CD4-positive, alpha-beta memory T cell (primary cell): ENCODE measurements at regions of chr1 and their contacts with region 1.

Region 1: DNA sequence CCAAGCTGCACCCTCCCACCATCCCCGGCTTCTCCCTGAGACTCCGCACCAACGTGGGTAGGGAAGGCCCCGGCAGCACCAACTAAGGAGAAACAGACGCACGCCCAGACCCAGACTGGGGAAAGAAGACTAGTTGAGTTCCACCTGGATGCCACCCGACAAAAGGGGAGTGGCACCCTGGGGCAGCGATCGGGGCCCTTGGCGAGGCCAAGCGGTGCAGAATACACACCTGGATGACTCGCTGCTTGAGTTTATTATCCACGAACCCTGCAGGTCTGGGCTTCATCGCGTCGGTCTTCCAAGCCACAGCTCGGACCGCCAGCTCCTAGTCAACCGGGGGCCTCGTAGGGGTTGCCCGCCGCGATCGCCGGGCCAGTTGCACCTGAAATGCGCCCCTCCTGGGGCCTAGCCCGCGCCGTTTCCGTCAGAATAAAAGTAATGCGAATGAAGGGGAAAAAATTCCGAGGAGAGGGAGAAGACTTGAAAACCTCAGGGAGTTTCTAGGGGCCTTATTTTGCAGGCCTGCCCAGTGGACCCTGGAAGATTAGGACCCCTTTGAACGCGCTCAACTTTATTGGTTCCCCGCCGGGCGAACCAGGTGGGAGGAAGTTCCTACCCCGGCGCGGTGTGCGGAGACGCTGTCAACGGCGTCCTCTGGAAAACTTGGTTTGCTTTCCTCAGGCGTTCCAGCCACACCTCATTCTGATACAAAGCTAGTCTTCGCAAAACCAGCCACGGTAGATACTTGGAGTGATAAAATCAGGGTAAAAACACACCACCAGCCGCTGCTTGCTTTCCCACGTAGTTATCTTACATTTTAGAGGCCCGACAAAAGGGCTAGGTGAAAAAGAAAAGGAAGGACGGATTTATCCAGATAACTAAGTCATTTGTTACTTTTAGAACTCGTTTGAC is at the start of gene NVL:
- DNase-seq: peak; percentile 82 to 85 (median 84)
- H3K4me3 ChIP-seq: peak within 1 kb of the TSS; percentile 85 to 99
- H3K4me3 Mint-ChIP-seq: peak within 1 kb of the TSS; percentile 91 to 99 (median 98)
- H3K27ac ChIP-seq: peak within 1 kb of the TSS; percentile 75
- H3K27ac Mint-ChIP-seq: peak within 1 kb of the TSS; percentile 95 to 99 (median 99)
- H3K4me1 ChIP-seq: peaks cover 49% of the 10 kb centered on the region
- H3K4me1 Mint-ChIP-seq: peaks cover 31 to 59% (median 43%) of the 10 kb centered on the region in 4 donors
- H3K27me3 ChIP-seq: no peaks in the 10 kb centered on the region
- H3K27me3 Mint-ChIP-seq: no peaks in the 10 kb centered on the region
- total RNA-seq, gene NVL: 38.9 to 46.7 TPM

Region 2: DNA sequence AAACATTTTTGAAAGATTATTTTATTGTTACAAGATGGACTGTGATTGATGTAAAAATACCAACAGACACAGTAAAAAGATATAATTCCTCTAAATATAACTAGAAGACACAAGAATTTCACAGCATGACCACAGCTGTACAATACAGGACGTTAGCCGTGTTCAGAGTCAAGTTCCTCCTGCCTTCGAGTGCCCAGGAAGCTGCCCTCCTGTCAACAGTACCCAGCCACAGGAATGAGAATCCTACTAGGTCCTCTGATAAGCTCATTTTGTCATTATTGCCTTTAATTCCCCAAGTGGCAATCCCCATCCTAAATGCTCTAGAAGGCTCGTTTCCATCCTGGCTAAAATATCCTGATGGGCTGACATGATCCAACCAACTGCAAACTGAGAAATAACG is 634.2 kb before region 1 on chr1:
- CTCF ChIA-PET with region 1: no interaction called
- POLR2A ChIA-PET with region 1: no interaction called
- intact Hi-C with region 1: loop called (anchors 5 kb)
- DNase-seq: no peak
- H3K4me3 ChIP-seq: no peak overlapping the region
- H3K4me3 Mint-ChIP-seq: no peak overlapping the region
- H3K27ac ChIP-seq: no peak overlapping the region
- H3K27ac Mint-ChIP-seq: no peak overlapping the region
- H3K4me1 ChIP-seq: peaks cover 7% of the 10 kb centered on the region
- H3K4me1 Mint-ChIP-seq: peaks cover 4 to 13% (median 5%) of the 10 kb centered on the region in 4 donors
- H3K27me3 ChIP-seq: no peaks in the 10 kb centered on the region
- H3K27me3 Mint-ChIP-seq: peaks cover 2 to 5% of the 10 kb centered on the region in 2 donors

Region 3: DNA sequence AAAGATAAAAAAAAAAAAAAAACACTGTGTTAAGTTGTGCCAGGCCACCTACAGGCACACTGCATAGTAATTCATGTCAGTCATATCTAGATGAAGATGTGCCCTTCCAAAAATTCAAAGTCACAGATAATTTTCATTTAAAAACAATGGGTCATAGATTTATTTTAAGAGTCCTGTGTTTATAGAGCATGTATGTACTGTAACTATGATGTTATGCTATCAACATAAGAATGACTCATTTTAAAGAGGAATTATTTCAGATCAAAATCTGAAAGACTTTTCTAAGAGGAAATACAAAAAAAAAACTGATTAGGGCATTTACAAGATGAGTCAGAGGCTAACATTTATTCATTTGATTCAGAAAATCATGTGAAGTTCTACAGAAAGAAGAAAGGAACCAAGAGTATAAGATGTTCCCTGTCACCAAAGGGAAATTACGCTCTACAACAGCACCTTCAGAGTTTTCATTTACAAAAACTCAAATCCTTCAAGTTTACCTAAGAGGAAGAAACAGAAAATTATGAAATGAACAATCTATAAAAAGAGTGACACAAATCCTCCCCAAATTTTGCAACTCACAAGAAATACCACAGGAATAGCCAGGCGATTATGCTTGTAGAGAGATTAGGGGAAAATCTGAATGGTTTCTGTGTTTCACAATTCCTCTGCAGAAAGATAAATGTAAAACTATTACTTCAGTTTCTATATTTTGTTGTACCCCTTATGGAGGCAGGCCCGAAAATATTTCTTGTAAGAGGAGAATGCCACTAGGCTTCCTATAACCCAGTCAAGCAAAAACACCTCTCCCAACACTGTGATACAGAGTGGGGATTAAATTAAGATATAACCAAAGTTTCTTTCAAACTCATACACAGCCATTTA is 498.1 kb before region 1 on chr1:
- CTCF ChIA-PET with region 1: no interaction called
- POLR2A ChIA-PET with region 1: no interaction called
- intact Hi-C with region 1: loop called (anchors 5 kb)
- DNase-seq: peak; percentile 20 to 54 (median 52)
- H3K4me3 ChIP-seq: no peak overlapping the region
- H3K4me3 Mint-ChIP-seq: peak overlapping the region; percentile 43 to 81 (median 66)
- H3K27ac ChIP-seq: peak overlapping the region; percentile 70
- H3K27ac Mint-ChIP-seq: peak overlapping the region in 4 of 7 donors; percentile 57 to 97 (median 84)
- H3K4me1 ChIP-seq: peaks cover 69% of the 10 kb centered on the region
- H3K4me1 Mint-ChIP-seq: peaks cover 20 to 30% (median 25%) of the 10 kb centered on the region in 4 donors
- H3K27me3 ChIP-seq: no peaks in the 10 kb centered on the region
- H3K27me3 Mint-ChIP-seq: no peaks in the 10 kb centered on the region

Region 4: DNA sequence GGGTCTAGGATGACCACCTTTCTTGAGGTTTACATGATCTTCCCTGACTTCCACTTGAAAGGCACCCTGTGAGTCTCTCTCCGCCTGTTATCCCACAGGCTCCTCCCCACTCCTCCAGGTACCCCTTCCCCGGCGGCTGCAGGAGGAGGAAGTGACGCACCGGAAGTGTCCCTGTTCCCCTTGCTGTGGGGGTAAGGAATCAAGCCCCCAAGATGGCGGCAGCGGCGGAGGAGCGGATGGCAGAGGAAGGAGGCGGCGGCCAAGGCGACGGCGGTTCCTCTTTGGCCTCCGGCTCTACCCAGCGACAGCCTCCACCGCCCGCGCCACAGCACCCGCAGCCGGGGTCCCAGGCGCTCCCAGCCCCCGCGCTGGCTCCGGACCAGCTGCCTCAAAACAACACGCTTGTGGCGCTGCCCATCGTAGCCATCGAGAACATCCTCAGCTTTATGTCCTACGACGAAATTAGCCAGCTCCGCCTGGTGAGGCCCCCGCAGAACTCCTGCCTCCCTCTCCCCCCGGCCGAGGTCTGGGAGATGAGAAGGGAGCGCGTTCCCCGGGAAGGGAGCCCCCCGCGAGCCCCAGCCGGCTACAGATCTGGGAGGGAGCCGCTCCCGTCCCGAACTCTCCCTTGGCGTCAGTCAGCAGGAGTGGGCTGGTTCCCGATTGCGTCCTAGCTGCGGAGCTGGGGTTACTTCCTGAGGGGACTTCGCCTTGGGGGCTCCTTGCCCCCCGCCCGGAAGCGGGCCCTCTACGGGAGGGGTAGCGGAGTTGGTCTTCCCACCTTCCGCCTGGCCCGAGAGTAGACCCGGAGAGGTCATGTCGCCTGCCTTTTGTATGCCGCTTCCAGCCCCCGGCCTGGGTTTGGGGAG is 215.9 kb before region 1 on chr1 and contains the start of gene FBXO28:
- CTCF ChIA-PET with region 1: interaction called, 68 read pairs
- POLR2A ChIA-PET with region 1: interaction called, 22 read pairs
- intact Hi-C with region 1: loop called (anchors 1 kb)
- DNase-seq: peak; percentile 87 to 95 (median 89)
- H3K4me3 ChIP-seq: peak within 1 kb of the TSS; percentile 53 to 54
- H3K4me3 Mint-ChIP-seq: peak within 1 kb of the TSS; percentile 87 to 97 (median 94)
- H3K27ac ChIP-seq: peak within 1 kb of the TSS; percentile 97
- H3K27ac Mint-ChIP-seq: peak within 1 kb of the TSS; percentile 84 to 97 (median 95)
- H3K4me1 ChIP-seq: peaks cover 32% of the 10 kb centered on the region
- H3K4me1 Mint-ChIP-seq: peaks cover 17 to 32% (median 24%) of the 10 kb centered on the region in 4 donors
- H3K27me3 ChIP-seq: no peaks in the 10 kb centered on the region
- H3K27me3 Mint-ChIP-seq: peaks cover 0 to 2% of the 10 kb centered on the region in 2 donors
- total RNA-seq, gene FBXO28: 36.4 to 39.7 TPM

Region 5: DNA sequence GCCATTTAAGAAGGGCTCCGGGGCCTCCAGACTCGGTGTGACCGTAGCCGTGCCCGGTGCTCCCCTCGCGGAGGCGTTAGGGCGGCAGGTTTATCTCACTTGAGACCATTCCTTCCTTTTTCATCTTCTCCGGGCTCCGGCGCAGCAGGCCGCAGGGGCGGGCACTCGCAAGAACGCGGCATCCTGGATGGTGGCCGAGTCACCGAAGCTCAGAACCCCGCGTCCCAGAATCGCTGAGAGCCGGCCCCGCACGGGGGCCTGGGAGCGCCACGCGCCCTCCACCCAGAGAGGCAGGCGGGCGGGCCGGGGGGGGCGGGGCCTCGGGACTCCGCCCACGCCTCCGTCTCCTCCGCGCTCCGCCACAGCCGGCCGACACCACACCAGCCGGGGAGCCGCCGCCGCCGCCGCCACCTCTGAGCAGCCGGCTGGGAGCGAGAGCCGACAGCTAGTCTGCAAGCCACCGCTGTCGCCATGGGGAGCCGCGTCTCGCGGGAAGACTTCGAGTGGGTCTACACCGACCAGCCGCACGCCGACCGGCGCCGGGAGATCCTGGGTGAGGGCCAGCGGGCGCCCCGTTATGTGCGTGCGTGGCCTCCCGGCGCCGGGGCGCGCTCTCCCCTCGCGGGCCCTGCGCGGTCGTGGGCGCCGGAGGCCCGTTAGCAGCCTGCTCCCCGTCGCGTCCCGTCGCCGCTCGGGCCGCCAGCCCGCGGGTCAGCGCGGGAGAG is 147.1 kb before region 1 on chr1 and contains the start of gene DEGS1:
- CTCF ChIA-PET with region 1: interaction called, 4 read pairs
- POLR2A ChIA-PET with region 1: interaction called, 21 read pairs
- intact Hi-C with region 1: loop called (anchors 1 kb)
- DNase-seq: peak; percentile 84 to 88 (median 85)
- H3K4me3 ChIP-seq: peak within 1 kb of the TSS; percentile 79
- H3K4me3 Mint-ChIP-seq: peak within 1 kb of the TSS; percentile 90 to 97 (median 94)
- H3K27ac ChIP-seq: peak within 1 kb of the TSS; percentile 93
- H3K27ac Mint-ChIP-seq: peak within 1 kb of the TSS; percentile 91 to 99 (median 98)
- H3K4me1 ChIP-seq: peaks cover 59% of the 10 kb centered on the region
- H3K4me1 Mint-ChIP-seq: peaks cover 27 to 53% (median 40%) of the 10 kb centered on the region in 4 donors
- H3K27me3 ChIP-seq: no peaks in the 10 kb centered on the region
- H3K27me3 Mint-ChIP-seq: no peaks in the 10 kb centered on the region
- total RNA-seq, gene DEGS1: 58.5 TPM

Region 6: DNA sequence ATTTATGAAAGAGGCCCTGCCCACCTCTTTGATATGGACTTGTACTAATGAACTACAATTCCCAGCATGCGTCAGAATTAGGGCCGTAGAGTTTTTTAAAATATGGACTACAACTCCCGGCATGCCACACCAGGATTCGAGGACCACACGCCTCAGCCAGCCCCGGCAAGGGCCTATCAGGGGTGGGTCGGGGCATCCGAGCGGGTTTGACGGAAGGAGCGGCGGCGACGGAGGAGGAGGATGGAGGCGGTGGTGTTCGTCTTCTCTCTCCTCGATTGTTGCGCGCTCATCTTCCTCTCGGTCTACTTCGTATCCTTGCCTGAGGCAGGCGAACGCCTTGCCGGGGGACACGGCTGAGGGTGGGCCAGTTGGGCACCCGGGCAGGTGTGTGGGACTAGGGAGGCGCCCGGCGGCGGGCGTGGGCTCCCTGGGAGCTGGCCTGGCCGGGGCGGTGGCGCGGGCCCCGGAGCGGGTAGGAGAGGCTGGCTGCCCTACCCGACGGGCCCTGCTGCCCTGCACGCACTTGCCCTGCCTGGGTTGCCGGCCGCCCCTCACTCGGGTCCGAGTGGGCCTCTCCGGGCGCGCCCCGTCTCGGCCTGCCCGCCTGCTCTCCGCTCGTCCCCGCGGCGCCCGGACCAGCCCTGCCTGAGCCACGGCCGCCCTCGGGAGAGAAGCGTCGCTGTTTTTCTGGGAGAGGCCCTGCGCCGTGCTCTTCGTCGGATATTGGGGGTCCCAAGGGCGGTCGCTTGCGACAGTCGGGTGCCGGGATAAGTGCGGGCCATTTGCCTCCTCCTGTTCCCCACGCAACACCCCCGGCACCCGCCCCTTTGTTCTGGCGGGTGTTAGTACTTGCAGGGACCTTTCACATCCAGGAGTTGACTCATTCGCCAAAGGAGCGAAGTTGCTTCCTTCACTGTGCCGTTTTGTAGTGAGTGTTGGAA is 26.9 kb after region 1 on chr1 and contains the start of gene CNIH4:
- CTCF ChIA-PET with region 1: interaction called, 36 read pairs
- POLR2A ChIA-PET with region 1: interaction called, 15 read pairs
- intact Hi-C with region 1: loop called (anchors 1 kb)
- DNase-seq: peak; percentile 92 to 95 (median 94)
- H3K4me3 ChIP-seq: peak within 1 kb of the TSS; percentile 51 to 63
- H3K4me3 Mint-ChIP-seq: peak within 1 kb of the TSS; percentile 90 to 99 (median 94)
- H3K27ac ChIP-seq: peak within 1 kb of the TSS; percentile 72
- H3K27ac Mint-ChIP-seq: peak within 1 kb of the TSS; percentile 73 to 98 (median 93)
- H3K4me1 ChIP-seq: peaks cover 27% of the 10 kb centered on the region
- H3K4me1 Mint-ChIP-seq: peaks cover 26 to 54% (median 39%) of the 10 kb centered on the region in 4 donors
- H3K27me3 ChIP-seq: no peaks in the 10 kb centered on the region
- H3K27me3 Mint-ChIP-seq: no peaks in the 10 kb centered on the region
- total RNA-seq, gene CNIH4: 45.5 to 50.9 TPM

Region 7: DNA sequence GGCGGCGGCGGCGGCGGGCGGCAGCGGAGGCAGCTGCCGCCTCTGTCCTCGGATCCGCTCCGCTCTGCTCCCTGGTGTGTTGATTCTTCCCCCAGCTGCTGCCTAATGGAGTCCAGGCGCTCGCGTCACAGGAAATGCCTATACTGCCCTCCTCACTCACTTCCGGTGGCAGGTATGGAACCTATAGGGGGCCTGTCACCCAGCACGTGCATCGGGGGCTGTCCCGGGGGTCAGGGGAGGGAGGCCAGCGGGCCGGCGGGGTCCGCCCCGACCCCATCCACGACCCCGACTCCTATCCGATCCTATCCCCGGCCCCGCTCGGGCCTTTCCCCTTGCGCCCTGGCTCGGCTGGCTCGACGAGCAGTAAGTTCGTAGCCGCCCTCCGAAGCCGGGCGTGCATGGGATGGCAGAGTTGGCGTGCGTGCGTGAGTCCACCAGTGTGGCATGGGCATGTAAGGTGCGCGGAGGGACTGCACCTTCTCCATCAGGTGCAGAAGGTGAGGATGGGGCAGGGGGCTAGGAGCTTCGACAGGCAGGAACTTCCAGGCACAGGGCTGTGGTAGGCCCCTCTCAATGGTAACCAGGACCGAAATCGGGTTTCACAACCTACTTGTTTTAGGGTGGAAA is 104.7 kb after region 1 on chr1 and contains the start of gene WDR26:
- CTCF ChIA-PET with region 1: no interaction called
- POLR2A ChIA-PET with region 1: interaction called, 14 read pairs
- intact Hi-C with region 1: no loop called
- DNase-seq: peak; percentile 85 to 93 (median 87)
- H3K4me3 ChIP-seq: peak within 1 kb of the TSS; percentile 73 to 96
- H3K4me3 Mint-ChIP-seq: peak within 1 kb of the TSS; percentile 93 to 97 (median 97)
- H3K27ac ChIP-seq: peak within 1 kb of the TSS; percentile 94
- H3K27ac Mint-ChIP-seq: peak within 1 kb of the TSS; percentile 97 to 99 (median 99)
- H3K4me1 ChIP-seq: peaks cover 57% of the 10 kb centered on the region
- H3K4me1 Mint-ChIP-seq: peaks cover 39 to 69% (median 49%) of the 10 kb centered on the region in 4 donors
- H3K27me3 ChIP-seq: no peaks in the 10 kb centered on the region
- H3K27me3 Mint-ChIP-seq: no peaks in the 10 kb centered on the region
- total RNA-seq, gene WDR26: 121 to 123 TPM